ENCODE measurements at regions of chr14 and their contacts with region 1.

Region 1: GRCh38 chr14:75709207-75709812 is 48.3 kb downstream of the TTLL5 start:
- DNase-seq: peak; percentile 79 to 82
- ATAC-seq: peak; percentile 87
- H3K4me3 ChIP-seq: no peak overlapping the region
- H3K27ac ChIP-seq: no peak overlapping the region
- H3K4me1 ChIP-seq: peaks cover 0 to 5% of the 10 kb centered on the region in 2 donors
- H3K27me3 ChIP-seq: no peaks in the 10 kb centered on the region

Region 2: DNA sequence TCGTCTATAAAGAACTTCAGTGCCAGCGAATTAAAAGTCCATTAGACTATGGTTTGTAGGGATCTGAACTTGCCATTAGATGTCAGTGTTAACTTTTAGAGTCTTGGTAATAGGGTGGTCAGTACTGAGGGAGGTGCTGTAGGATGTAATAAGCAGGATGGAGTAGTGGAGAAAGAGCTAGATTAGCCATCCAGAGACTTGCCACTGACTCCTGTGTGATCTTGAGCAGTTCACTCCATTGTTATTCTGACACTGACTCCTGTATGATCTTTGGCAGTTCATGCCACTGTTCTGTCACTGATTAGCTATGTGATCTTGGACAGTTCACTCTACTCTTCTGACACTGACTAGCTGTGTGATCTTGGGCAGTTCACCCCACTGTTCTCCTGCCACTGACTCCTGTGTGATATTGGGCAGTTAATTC is 85.3 kb after region 1 on chr14:
- intact Hi-C with region 1: loop called in 1 of 2 experiments (anchors 10 kb)
- DNase-seq: no peak
- ATAC-seq: peak; percentile 93
- H3K4me3 ChIP-seq: no peak overlapping the region
- H3K27ac ChIP-seq: no peak overlapping the region
- H3K4me1 ChIP-seq: no peaks in the 10 kb centered on the region
- H3K27me3 ChIP-seq: no peaks in the 10 kb centered on the region

Region 3: DNA sequence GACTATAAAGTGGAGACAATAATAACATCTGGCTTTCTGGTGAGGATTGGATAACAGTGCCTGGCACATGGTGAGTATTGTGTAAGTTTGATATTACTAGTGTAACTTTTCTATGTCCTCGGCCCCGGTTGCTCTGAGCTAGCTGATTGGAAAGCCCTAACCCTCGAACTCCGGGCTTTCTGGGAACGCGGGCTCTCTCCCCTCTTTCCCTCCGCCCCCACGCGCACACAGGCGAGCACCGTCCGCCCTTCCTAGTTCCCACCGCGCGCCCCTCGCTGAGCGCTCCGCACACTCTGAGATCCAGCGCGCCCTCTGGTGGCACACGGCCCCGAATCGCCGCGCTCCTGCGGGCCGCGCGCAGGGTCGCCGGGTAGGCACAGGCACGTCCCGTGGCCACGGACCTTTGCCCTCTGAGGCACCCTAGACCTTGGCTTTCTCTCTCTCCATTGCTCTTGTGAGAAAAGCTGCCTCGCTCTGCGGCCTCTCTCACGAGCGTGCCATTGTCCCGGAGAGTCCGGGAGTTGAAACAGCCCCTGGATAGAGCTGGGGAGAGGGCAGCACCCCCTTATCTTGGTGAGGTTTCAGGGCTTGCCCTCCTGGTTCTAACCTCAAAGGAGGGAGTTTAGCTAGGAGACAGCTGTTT is 643.5 kb after region 1 on chr14:
- intact Hi-C with region 1: loop called (anchors 5 to 10 kb)
- DNase-seq: peak; percentile 60 to 88
- ATAC-seq: peak; percentile 82
- H3K4me3 ChIP-seq: no peak overlapping the region
- H3K27ac ChIP-seq: no peak overlapping the region
- H3K4me1 ChIP-seq: no peaks in the 10 kb centered on the region
- H3K27me3 ChIP-seq: no peaks in the 10 kb centered on the region

Measured in aorta (tissue), 5 donors.